GM12878 (cell line): ENCODE measurements at regions of chr6 and their contacts with region 1.

Region 1: DNA sequence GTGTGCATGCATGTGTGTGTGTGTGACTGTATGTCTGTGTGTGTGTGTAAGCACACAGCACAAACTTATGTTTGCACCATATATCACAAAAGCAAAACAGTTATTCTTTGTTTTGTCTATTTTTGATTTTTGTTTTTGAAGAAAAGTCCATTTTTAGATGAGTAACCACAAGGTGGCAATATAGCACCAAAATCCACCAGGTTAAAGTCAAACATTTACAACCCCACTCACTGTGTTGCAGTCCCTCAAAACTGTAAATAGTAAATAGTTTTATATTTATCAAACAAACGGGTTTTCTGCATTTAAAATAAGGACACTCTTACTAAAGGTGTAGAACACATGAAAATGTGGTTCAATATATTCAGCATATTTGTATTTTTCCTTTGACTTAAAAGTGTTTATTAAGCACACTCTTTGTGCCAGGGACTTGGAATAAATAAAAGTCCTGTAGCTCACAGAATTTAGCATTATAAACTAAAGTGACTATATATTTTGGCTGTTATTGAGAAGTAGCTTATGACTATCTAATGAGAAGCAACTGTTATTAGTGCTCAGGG is 118.5 kb downstream of the GFRAL start:
- DNase-seq: peak; percentile 4
- ATAC-seq: peak; percentile 32; the same call in 1 of the 3 replicates
- H3K4me3 ChIP-seq: no peak overlapping the region
- H3K27ac ChIP-seq: no peak overlapping the region
- H3K4me1 ChIP-seq: no peaks in the 10 kb centered on the region
- H3K27me3 ChIP-seq: no peaks in the 10 kb centered on the region
- CTCF ChIP-seq: peak; percentile 28 to 47 (median 47); a peak in 5 of 6 replicates
- EP300 ChIP-seq: no peak
- POLR2A ChIP-seq: no peak
- RAD21 ChIP-seq: peak; percentile 62

Region 2: DNA sequence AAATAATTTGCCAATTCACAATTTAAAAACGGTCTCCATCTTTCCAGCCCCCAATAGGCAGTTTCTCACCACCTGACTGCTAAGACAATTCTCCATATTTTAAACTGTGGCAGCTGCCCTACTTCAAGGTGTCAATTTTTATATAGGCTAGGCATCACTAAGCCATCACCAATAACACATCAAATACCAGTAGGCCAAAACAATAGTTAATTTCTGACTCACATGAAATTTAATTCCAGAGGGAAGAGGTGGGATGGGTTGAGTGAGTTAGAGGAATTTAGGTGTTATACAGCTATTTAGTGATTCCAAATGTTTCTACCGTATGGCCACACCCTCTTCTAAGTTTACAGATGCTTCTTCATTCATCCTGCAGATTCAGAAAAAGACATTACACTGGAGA is 68.6 kb before region 1 on chr6:
- CTCF ChIA-PET with region 1: no interaction called
- POLR2A ChIA-PET with region 1: no interaction called
- RAD21 ChIA-PET with region 1: no interaction called
- SMC1A ChIA-PET with region 1: no interaction called
- in situ Hi-C with region 1: no loop called
- intact Hi-C with region 1: no loop called
- DNase-seq: no peak
- ATAC-seq: no peak
- H3K4me3 ChIP-seq: no peak overlapping the region
- H3K27ac ChIP-seq: no peak overlapping the region
- H3K4me1 ChIP-seq: no peaks in the 10 kb centered on the region
- H3K27me3 ChIP-seq: no peaks in the 10 kb centered on the region
- CTCF ChIP-seq: no peak
- EP300 ChIP-seq: no peak
- POLR2A ChIP-seq: no peak
- RAD21 ChIP-seq: no peak

Region 3: DNA sequence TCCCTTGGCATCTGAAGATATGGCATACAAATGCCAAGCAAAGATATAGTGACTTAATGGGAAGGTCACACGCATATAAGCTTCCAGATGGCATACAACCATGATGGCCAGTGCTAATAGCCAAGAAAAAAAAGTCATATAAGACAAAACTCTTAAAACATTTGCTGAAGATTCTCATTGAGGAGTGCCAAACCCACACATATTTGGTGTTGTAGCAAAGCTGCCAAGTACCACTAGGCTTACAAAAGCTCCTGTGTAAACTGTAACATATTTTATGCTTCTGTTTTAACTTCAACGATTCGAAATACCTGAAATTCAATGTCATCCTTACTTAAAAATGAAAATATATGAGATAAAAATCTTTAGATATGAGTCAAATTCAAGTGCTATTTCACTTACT is 10.3 kb after region 1 on chr6:
- CTCF ChIA-PET with region 1: interaction called, 4 read pairs
- POLR2A ChIA-PET with region 1: no interaction called
- RAD21 ChIA-PET with region 1: no interaction called
- SMC1A ChIA-PET with region 1: interaction called, 10 read pairs
- in situ Hi-C with region 1: no loop called
- intact Hi-C with region 1: no loop called
- DNase-seq: no peak
- ATAC-seq: no peak
- H3K4me3 ChIP-seq: no peak overlapping the region
- H3K27ac ChIP-seq: no peak overlapping the region
- H3K4me1 ChIP-seq: no peaks in the 10 kb centered on the region
- H3K27me3 ChIP-seq: no peaks in the 10 kb centered on the region
- CTCF ChIP-seq: no peak
- EP300 ChIP-seq: no peak
- POLR2A ChIP-seq: no peak
- RAD21 ChIP-seq: no peak

Region 4: GRCh38 chr6:55886185-55886836 is 440.6 kb after region 1 on chr6:
- CTCF ChIA-PET with region 1: interaction called, 6 read pairs
- POLR2A ChIA-PET with region 1: no interaction called
- RAD21 ChIA-PET with region 1: no interaction called
- SMC1A ChIA-PET with region 1: interaction called, 3 read pairs
- in situ Hi-C with region 1: no loop called
- intact Hi-C with region 1: loop called (anchors 1 kb)
- DNase-seq: no peak
- ATAC-seq: no peak
- H3K4me3 ChIP-seq: no peak overlapping the region
- H3K27ac ChIP-seq: no peak overlapping the region
- H3K4me1 ChIP-seq: no peaks in the 10 kb centered on the region
- H3K27me3 ChIP-seq: no peaks in the 10 kb centered on the region
- CTCF ChIP-seq: peak in 2 of 3 experiments; percentile 2 to 17; a peak in 2 of 6 replicates
- EP300 ChIP-seq: no peak
- POLR2A ChIP-seq: no peak
- RAD21 ChIP-seq: peak; percentile 60

Region 5: DNA sequence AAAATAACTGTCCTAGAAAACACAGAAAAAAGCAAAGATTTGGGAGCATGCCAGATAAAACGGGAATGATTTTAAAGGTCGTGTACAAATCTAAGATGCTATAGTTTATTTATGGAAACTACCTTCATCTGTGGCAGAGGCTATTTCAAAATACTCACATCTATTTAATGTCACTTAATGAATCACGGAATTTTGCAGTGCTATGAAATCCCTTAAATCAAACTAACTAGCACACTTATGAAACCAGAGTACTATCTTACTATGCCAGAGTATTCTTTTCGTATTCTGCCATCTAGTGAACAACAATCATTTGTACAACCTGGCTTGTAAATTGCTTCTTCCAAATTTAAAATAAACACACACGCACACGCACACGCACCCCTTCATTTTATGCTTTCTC is 507.6 kb after region 1 on chr6:
- CTCF ChIA-PET with region 1: interaction called, 16 read pairs
- POLR2A ChIA-PET with region 1: no interaction called
- RAD21 ChIA-PET with region 1: no interaction called
- SMC1A ChIA-PET with region 1: no interaction called
- in situ Hi-C with region 1: no loop called
- intact Hi-C with region 1: loop called (anchors 5 kb)
- DNase-seq: no peak
- ATAC-seq: no peak
- H3K4me3 ChIP-seq: no peak overlapping the region
- H3K27ac ChIP-seq: no peak overlapping the region
- H3K4me1 ChIP-seq: no peaks in the 10 kb centered on the region
- H3K27me3 ChIP-seq: no peaks in the 10 kb centered on the region
- CTCF ChIP-seq: peak in 1 of 3 experiments; percentile 33; a peak in 1 of 6 replicates
- EP300 ChIP-seq: no peak
- POLR2A ChIP-seq: no peak
- RAD21 ChIP-seq: 0 out of 2 replicates have a peak, but pooled peaks have one; percentile 22